AG04450 (cell line): ENCODE measurements at regions of chr11 and their contacts with region 1.

Region 1: GRCh38 chr11:33687733-33688479 is 12.7 kb downstream of the C11orf91 start:
- DNase-seq: no peak
- H3K4me3 ChIP-seq: no peak overlapping the region
- H3K27ac ChIP-seq: no peak overlapping the region
- H3K27me3 ChIP-seq: no peaks in the 10 kb centered on the region
- CTCF ChIP-seq: peak; percentile 82

Region 2: DNA sequence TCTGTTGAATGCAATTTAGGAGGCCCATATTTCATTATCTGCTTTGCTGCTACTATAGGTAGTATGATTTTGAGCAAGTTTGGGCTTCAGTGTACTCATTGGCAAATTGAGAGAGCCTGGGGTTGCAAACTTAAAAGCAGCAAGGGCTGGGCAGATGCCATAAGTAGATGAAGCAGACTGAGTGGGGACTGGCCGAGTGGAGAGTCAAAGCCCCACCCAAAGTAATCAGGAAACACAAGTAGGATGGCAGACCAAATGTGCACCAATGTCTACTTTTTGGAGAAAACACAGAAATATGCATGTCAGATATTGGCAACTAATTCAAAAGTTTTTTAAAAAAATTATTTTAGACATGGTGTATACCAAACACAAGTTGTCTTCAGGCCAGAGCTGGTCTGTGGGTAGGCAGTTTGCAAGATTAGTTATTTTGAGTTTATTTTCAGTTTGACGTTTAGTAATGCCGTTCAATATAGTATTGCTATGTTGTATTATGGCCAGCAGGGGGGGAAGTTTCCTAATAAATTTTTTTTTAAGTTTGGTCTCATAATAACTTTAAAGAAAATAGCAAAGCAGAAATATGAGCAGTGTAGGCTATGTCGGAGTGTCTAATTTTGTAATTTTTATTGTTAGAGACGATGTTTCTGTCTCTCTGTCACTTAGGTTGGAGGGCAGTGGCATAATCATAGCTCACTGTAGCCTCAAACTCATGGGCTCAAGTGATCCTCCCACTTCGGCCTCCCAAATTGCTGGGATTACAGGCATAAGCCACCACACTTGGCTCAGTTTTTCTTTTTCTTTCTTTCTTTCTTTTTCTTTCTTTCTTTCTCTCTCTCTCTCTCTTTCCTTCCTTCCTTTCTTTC is 325.6 kb before region 1 on chr11:
- CTCF ChIA-PET with region 1: interaction called, 210 read pairs
- POLR2A ChIA-PET with region 1: interaction called, 3 read pairs
- DNase-seq: no peak
- H3K4me3 ChIP-seq: no peak overlapping the region
- H3K27ac ChIP-seq: no peak overlapping the region
- H3K27me3 ChIP-seq: no peaks in the 10 kb centered on the region
- CTCF ChIP-seq: peak; percentile 52

Region 3: GRCh38 chr11:33700425-33701271 is 12.7 kb after region 1 on chr11 and contains the start of gene C11orf91:
- CTCF ChIA-PET with region 1: interaction called, 4 read pairs
- POLR2A ChIA-PET with region 1: interaction called, 30 read pairs
- DNase-seq: peak; percentile 87
- H3K4me3 ChIP-seq: peak within 1 kb of the TSS; percentile 66
- H3K27ac ChIP-seq: peak within 1 kb of the TSS; percentile 82
- H3K27me3 ChIP-seq: no peaks in the 10 kb centered on the region
- CTCF ChIP-seq: no peak
- polyA plus RNA-seq, gene C11orf91: not detected in 2 replicates

Region 4: GRCh38 chr11:33808228-33808828 is 120.4 kb after region 1 on chr11:
- CTCF ChIA-PET with region 1: no interaction called
- POLR2A ChIA-PET with region 1: no interaction called
- DNase-seq: peak; percentile 63
- H3K4me3 ChIP-seq: no peak overlapping the region
- H3K27ac ChIP-seq: no peak overlapping the region
- H3K27me3 ChIP-seq: peaks cover 3% of the 10 kb centered on the region
- CTCF ChIP-seq: peak; percentile 94